Astrocyte of the cerebellum (primary cell): ENCODE measurements at regions of chr4 and their contacts with region 1.

Region 1: GRCh38 chr4:19650903-19651864 is 600.5 kb upstream of the SLIT2 start:
- DNase-seq: no peak
- H3K4me3 ChIP-seq: no peak overlapping the region
- CTCF ChIP-seq: no peak

Region 2: GRCh38 chr4:19596342-19596741 is 54.8 kb before region 1 on chr4:
- in situ Hi-C with region 1: loop called (anchors 5 kb)
- DNase-seq: no peak
- H3K4me3 ChIP-seq: no peak overlapping the region
- CTCF ChIP-seq: no peak